ENCODE measurements at regions of chr18 and their contacts with region 1.

Region 1: DNA sequence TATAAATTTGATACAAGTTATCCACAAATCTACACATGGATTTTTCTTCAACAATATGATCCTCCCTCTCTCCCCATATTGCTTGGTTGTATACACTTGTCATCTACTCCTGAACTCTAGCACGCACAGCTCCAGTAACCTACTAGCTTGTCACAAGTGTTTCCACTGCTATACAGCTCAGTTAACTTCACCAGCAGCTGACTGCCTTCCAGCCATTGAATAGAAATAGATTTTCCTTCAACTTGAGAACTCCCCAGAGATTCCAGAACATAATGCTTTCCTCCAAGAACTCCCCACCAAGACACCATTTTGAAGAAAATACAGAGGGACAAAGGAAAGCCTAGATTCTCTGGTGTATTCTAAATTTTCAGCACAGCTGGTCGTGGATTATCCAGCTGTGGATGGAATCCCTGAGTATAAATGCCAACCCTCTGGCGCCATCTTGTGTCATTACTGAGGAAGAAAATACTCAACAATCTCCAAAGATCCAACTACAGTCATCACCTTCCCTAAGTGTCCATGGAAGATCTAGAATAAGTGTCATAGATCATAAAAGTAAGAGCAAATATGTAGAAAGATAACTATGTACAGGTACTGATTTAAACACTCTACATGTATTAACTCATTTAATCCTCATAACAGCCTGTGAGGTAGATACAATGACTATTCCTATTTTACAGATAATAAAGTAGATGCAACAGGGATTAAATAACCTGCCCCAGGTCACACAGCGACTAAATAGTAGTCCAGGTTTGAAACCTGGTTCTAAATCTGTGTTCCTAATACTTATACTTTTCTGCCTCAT is 156.7 kb downstream of the ARHGAP28 start:
- DNase-seq: peak; percentile 55
- H3K4me3 ChIP-seq: no peak overlapping the region
- H3K27ac ChIP-seq: no peak overlapping the region
- H3K4me1 ChIP-seq: no peaks in the 10 kb centered on the region
- H3K27me3 ChIP-seq: no peaks in the 10 kb centered on the region
- CTCF ChIP-seq: peak; percentile 71

Region 2: GRCh38 chr18:5424903-5425664 is 1461.1 kb before region 1 on chr18:
- CTCF ChIA-PET with region 1: no interaction called
- POLR2A ChIA-PET with region 1: no interaction called
- intact Hi-C with region 1: loop called (anchors 10 kb)
- DNase-seq: peak; percentile 49
- H3K4me3 ChIP-seq: no peak overlapping the region
- H3K27ac ChIP-seq: no peak overlapping the region
- H3K4me1 ChIP-seq: no peaks in the 10 kb centered on the region
- H3K27me3 ChIP-seq: peaks cover 26% of the 10 kb centered on the region
- CTCF ChIP-seq: peak; percentile 66

Region 3: GRCh38 chr18:5868218-5869115 is 1017.7 kb before region 1 on chr18:
- CTCF ChIA-PET with region 1: no interaction called
- POLR2A ChIA-PET with region 1: no interaction called
- intact Hi-C with region 1: loop called (anchors 2 kb)
- DNase-seq: peak; percentile 77
- H3K4me3 ChIP-seq: no peak overlapping the region
- H3K27ac ChIP-seq: no peak overlapping the region
- H3K4me1 ChIP-seq: no peaks in the 10 kb centered on the region
- H3K27me3 ChIP-seq: no peaks in the 10 kb centered on the region
- CTCF ChIP-seq: peak; percentile 76

Region 4: GRCh38 chr18:6543330-6543908 is 342.8 kb before region 1 on chr18:
- CTCF ChIA-PET with region 1: no interaction called
- POLR2A ChIA-PET with region 1: no interaction called
- intact Hi-C with region 1: loop called (anchors 5 kb)
- DNase-seq: peak; percentile 7
- H3K4me3 ChIP-seq: no peak overlapping the region
- H3K27ac ChIP-seq: no peak overlapping the region
- H3K4me1 ChIP-seq: no peaks in the 10 kb centered on the region
- H3K27me3 ChIP-seq: no peaks in the 10 kb centered on the region
- CTCF ChIP-seq: peak; percentile 42; the same call in 1 of the 2 replicates

Region 5: DNA sequence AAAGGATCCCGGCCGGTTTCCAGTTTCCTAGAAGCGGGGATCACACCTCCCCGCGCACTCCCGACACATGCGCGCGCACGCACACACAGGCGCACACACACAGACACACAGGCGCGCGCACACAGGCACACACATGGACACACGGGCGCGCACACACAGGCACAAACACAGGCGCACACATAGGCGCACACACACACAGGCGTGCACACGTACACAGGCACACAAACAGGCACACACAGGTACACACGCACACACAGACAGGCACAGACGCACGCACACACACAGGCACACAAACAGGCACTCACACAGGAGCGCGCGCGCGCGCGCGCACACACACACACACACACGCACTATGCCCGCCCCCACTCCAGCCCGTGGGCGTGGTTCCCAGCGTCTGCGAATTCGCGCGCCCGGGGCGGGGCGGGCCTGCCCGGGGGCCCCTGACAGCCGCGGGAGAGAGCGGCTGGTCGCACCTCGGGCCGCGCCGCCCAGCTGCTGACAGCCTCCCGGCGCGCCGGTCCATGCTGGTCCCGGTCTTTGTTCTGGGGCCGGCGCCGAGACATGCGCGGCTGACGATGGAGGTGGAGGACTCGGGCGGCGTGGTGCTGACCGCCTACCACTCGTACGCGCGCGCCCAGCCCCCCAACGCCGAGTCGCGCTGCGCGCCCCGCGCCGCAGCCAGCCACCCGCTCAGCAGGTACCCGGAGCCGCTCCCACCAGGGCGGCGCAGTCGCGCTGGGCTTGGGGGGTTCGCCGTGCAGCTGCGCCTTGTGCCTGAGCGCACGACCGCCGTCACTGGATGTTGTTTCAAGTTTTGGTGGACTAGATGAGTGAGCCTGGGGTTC is 156.7 kb before region 1 on chr18 and contains the start of gene ARHGAP28:
- CTCF ChIA-PET with region 1: no interaction called
- POLR2A ChIA-PET with region 1: no interaction called
- intact Hi-C with region 1: no loop called
- DNase-seq: peak; percentile 19
- H3K4me3 ChIP-seq: peak within 1 kb of the TSS; percentile 21
- H3K27ac ChIP-seq: no peak within 1 kb of the TSS
- H3K4me1 ChIP-seq: no peaks in the 10 kb centered on the region
- H3K27me3 ChIP-seq: no peaks in the 10 kb centered on the region
- CTCF ChIP-seq: no peak
- total RNA-seq, gene ARHGAP28: not detected in 2 replicates

Region 6: DNA sequence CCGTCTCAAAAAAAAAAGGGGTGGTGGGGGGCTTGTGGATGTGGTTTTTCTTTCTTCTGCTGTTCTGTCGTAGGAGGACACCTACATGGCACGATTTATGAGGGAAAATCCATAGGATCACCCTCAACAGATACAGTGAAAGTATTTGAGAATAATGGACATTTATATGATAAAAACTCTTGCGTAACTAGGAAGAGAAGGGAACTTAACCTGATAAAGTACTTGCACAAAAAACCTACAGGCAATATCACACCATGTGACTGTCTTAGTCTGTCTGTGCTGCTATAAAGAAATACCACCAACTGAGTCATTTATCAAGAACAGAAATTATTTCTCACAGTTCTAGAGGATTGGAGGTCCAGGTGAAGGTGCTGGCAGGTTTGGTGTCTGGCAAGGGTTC is 253.2 kb after region 1 on chr18:
- CTCF ChIA-PET with region 1: no interaction called
- POLR2A ChIA-PET with region 1: no interaction called
- intact Hi-C with region 1: no loop called
- DNase-seq: no peak
- H3K4me3 ChIP-seq: no peak overlapping the region
- H3K27ac ChIP-seq: no peak overlapping the region
- H3K4me1 ChIP-seq: no peaks in the 10 kb centered on the region
- H3K27me3 ChIP-seq: no peaks in the 10 kb centered on the region
- CTCF ChIP-seq: no peak

Measured in A673 (cell line).